ENCODE measurements at regions of chr6 and their contacts with region 1.

Region 1: DNA sequence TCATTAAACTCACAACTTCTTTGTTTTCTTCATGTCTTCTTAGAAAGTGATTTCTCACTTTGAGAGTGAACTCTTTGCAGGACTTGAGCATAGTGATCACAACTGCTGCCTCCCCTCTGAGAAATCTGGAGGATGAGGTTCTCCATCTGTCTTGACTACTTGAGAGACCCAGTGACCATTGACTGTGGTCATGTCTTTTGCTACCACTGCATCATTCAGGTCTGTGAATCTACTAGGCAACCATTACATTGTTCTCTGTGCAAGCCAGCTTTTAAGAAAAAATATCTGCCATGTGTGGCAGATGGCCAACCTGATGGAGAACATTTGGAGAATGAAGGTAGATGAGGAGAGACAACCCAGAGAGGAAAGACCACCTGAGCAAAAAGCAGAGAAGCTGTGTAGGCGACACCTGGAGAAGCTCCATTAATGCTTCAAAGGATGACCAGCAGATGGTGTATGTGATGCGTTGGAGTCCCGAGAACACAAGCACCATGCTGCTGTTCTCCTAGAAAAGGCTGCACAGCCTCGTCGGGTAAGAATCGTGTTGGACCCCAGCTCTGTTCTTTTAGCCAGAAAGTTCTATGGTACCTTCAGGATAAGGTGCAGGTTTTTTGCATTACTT is 25.1 kb upstream of the TRIM26 start:
- DNase-seq: peak; percentile 71
- ATAC-seq: peak; percentile 94
- H3K4me3 ChIP-seq: no peak overlapping the region
- H3K27ac ChIP-seq: no peak overlapping the region
- H3K4me1 ChIP-seq: no peaks in the 10 kb centered on the region
- H3K27me3 ChIP-seq: peaks cover 27% of the 10 kb centered on the region
- CTCF ChIP-seq: peak; percentile 76

Region 2: DNA sequence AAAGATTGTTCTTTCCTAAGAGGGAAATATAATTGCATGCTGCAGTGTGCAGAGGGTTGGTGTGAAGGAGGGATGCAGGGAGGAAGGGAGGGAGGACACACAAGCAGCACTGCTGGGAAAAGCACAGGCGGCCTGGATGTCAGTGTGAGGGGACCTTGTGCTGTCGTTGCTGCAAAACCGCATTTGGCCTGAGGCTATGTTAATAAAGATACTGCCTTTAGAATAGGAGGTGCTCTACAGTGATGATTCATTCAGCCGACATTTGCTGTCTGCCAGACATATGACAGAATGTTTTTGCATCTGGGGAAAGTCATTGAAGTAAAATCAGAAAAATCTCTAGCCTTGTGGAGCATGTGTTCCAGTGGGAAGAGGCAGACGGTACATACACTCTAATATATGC is 25.4 kb after region 1 on chr6:
- CTCF ChIA-PET with region 1: no interaction called
- POLR2A ChIA-PET with region 1: no interaction called
- intact Hi-C with region 1: no loop called
- DNase-seq: peak; percentile 95
- ATAC-seq: peak; percentile 72
- H3K4me3 ChIP-seq: no peak overlapping the region
- H3K27ac ChIP-seq: no peak overlapping the region
- H3K4me1 ChIP-seq: peaks cover 25% of the 10 kb centered on the region
- H3K27me3 ChIP-seq: no peaks in the 10 kb centered on the region
- CTCF ChIP-seq: no peak

Region 3: GRCh38 chr6:30326526-30327260 is 88.4 kb after region 1 on chr6 and contains the start of gene TRIM39:
- CTCF ChIA-PET with region 1: interaction called, 5 read pairs
- POLR2A ChIA-PET with region 1: no interaction called
- intact Hi-C with region 1: loop called (anchors 5 kb)
- DNase-seq: peak; percentile 73
- ATAC-seq: peak; percentile 67
- H3K4me3 ChIP-seq: peak within 1 kb of the TSS; percentile 95
- H3K27ac ChIP-seq: peak within 1 kb of the TSS; percentile 87
- H3K4me1 ChIP-seq: peaks cover 37% of the 10 kb centered on the region
- H3K27me3 ChIP-seq: no peaks in the 10 kb centered on the region
- CTCF ChIP-seq: no peak
- total RNA-seq, gene TRIM39: 17.9 and 24.8 TPM in 2 replicates

Region 4: GRCh38 chr6:30357678-30358540 is 119.6 kb after region 1 on chr6:
- CTCF ChIA-PET with region 1: no interaction called
- POLR2A ChIA-PET with region 1: no interaction called
- intact Hi-C with region 1: loop called (anchors 5 kb)
- DNase-seq: peak; percentile 77
- ATAC-seq: peak; percentile 91
- H3K4me3 ChIP-seq: peak overlapping the region; percentile 66
- H3K27ac ChIP-seq: no peak overlapping the region
- H3K4me1 ChIP-seq: no peaks in the 10 kb centered on the region; the same call in 1 of the 2 replicates
- H3K27me3 ChIP-seq: peaks cover 45% of the 10 kb centered on the region
- CTCF ChIP-seq: peak; percentile 81

Measured in PC-3 (cell line).